Transverse colon (tissue), 4 donors: ENCODE measurements at regions of chr3 and their contacts with region 1.

Region 1: DNA sequence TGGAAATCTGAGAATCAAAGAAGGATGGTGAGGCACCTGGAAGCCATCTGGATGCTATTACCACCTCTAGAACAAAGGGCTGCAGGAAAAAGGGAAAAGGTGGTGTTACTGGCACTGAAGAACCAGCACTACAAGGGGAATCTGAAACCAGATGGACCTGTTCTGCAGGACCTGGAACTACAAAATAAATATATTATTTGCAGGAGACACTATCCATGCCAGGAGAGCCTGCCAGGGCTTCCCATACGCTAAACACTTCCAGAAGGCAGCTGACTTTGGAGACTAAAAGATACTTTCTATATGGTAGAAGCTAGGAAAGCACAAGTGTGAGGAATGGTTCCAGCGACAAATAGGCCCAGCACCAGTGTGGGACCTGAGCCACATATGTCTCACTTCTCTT is 83.4 kb upstream of the POU1F1 start:
- DNase-seq: no peak
- H3K4me3 ChIP-seq: no peak overlapping the region
- H3K27ac ChIP-seq: no peak overlapping the region
- H3K4me1 ChIP-seq: no peaks in the 10 kb centered on the region
- H3K27me3 ChIP-seq: no peaks in the 10 kb centered on the region
- CTCF ChIP-seq: no peak
- EP300 ChIP-seq: no peak
- POLR2A ChIP-seq: no peak

Region 2: GRCh38 chr3:89079944-89080343 is 1720.1 kb after region 1 on chr3:
- in situ Hi-C with region 1: no loop called
- intact Hi-C with region 1: loop called (anchors 5 kb)
- DNase-seq: no peak
- H3K4me3 ChIP-seq: no peak overlapping the region
- H3K27ac ChIP-seq: no peak overlapping the region
- H3K4me1 ChIP-seq: no peaks in the 10 kb centered on the region
- H3K27me3 ChIP-seq: no peaks in the 10 kb centered on the region
- CTCF ChIP-seq: no peak
- EP300 ChIP-seq: no peak
- POLR2A ChIP-seq: no peak